Posterior cingulate gyrus (tissue), 11 donors: ENCODE measurements at regions of chr15 and their contacts with region 1.

Region 1: GRCh38 chr15:33067941-33068481 is 126.5 kb downstream of the FMN1 start:
- DNase-seq: peak in 7 of 10 donors; percentile 19 to 89 (median 29)

Region 2: DNA sequence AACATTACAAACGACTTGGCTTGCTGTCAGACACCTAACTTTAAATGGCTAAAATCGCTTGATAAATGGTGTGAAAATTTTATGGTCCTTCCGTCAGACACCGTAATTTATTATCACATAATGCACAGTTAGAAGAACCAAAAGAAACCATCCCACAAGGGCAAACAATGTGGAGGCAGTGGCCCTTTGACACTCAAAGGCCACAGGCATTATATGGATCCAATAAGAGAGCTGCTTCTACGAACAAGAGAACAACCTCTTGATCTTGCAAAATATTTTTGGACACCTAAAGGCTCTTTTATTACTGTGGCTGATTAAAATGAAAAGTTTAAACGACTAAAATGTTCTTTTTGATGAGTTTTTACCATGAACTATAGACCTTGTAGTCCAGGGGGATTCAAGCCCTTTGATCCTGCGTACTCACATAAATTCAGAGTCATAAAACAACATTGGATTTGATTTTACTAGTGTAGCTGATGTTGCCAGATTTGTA is 76.3 kb before region 1 on chr15:
- intact Hi-C with region 1: no loop called
- DNase-seq: no peak

Region 3: GRCh38 chr15:33031324-33031821 is 36.6 kb before region 1 on chr15:
- intact Hi-C with region 1: loop called (anchors 5 kb)
- DNase-seq: peak in 2 of 10 donors; percentile 14 to 81

Region 4: GRCh38 chr15:33226559-33227181 is 158.7 kb after region 1 on chr15:
- intact Hi-C with region 1: no loop called
- DNase-seq: peak in 1 of 10 donors; percentile 10